HepG2 (cell line): ENCODE measurements at regions of chr1 and their contacts with region 1.

Region 1: DNA sequence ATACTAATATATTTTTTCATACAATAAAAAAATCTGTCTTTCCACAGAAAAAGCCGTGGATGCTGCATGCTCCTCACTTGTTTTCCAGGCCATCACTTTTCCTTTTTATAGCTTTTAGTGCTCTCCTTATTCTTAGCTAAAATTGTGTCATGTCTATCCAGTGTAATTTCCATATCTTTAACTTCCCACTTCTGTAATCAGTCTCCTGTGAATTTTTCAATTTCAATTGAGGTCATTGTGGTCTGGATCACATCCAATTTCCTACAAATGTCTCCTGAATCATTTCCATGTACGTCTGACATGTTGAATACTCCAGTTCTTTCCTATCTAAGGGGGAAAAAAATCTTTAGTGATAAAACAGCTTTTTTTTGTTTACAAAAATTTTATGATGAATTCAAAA is 838.2 kb upstream of the B3GALT2 start:
- DNase-seq: no peak
- ATAC-seq: no peak
- H3K4me3 ChIP-seq: no peak overlapping the region
- H3K27ac ChIP-seq: no peak overlapping the region
- H3K4me1 ChIP-seq: no peaks in the 10 kb centered on the region
- H3K27me3 ChIP-seq: no peaks in the 10 kb centered on the region
- CTCF ChIP-seq: no peak
- EP300 ChIP-seq: no peak
- POLR2A ChIP-seq: no peak
- RAD21 ChIP-seq: no peak

Region 2: GRCh38 chr1:194004146-194004545 is 20.5 kb before region 1 on chr1:
- CTCF ChIA-PET with region 1: no interaction called
- POLR2A ChIA-PET with region 1: no interaction called
- in situ Hi-C with region 1: no loop called
- intact Hi-C with region 1: loop called (anchors 1 kb)
- DNase-seq: no peak
- ATAC-seq: no peak
- H3K4me3 ChIP-seq: no peak overlapping the region
- H3K27ac ChIP-seq: no peak overlapping the region
- H3K4me1 ChIP-seq: no peaks in the 10 kb centered on the region
- H3K27me3 ChIP-seq: no peaks in the 10 kb centered on the region
- CTCF ChIP-seq: no peak
- EP300 ChIP-seq: no peak
- POLR2A ChIP-seq: no peak
- RAD21 ChIP-seq: no peak